Vagina (tissue), 2 donors: ENCODE measurements at regions of chr5 and their contacts with region 1.

Region 1: DNA sequence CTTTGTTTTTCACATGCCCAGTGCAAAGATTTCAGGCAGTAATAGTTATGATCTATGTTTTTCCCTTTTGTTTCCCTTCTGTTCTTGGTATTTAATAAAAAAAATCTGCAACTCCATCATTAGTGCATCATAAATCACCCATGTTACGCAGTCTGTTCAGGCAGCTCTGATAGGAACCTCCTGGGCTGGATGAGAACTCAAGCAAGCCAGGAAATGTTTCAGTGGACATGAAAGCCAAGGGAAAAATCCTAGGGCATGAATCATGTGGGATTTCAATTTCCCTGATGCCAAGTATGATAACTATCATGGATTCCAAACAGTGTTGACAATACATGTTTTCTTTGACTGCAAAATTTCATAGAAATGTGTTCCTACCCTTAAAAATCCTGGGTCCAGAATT is 119.7 kb upstream of the TARS1 start:
- DNase-seq: peak in 1 of 2 donors; percentile 91
- H3K4me3 ChIP-seq: no peak overlapping the region
- H3K27ac ChIP-seq: peak overlapping the region; percentile 3
- H3K4me1 ChIP-seq: peaks cover 17% of the 10 kb centered on the region
- H3K27me3 ChIP-seq: no peaks in the 10 kb centered on the region
- CTCF ChIP-seq: no peak
- POLR2A ChIP-seq: no peak

Region 2: GRCh38 chr5:33336891-33337636 is 16.0 kb after region 1 on chr5:
- intact Hi-C with region 1: loop called (anchors 1 kb)
- DNase-seq: no peak
- H3K4me3 ChIP-seq: no peak overlapping the region
- H3K27ac ChIP-seq: no peak overlapping the region
- H3K4me1 ChIP-seq: peaks cover 9% of the 10 kb centered on the region
- H3K27me3 ChIP-seq: no peaks in the 10 kb centered on the region
- CTCF ChIP-seq: no peak
- POLR2A ChIP-seq: no peak

Region 3: GRCh38 chr5:33362915-33363314 is 41.9 kb after region 1 on chr5:
- intact Hi-C with region 1: loop called (anchors 5 kb)
- DNase-seq: peak in 1 of 2 donors; percentile 90
- H3K4me3 ChIP-seq: no peak overlapping the region
- H3K27ac ChIP-seq: peak overlapping the region; percentile 61
- H3K4me1 ChIP-seq: peaks cover 8% of the 10 kb centered on the region
- H3K27me3 ChIP-seq: no peaks in the 10 kb centered on the region
- CTCF ChIP-seq: no peak
- POLR2A ChIP-seq: no peak